ENCODE measurements at regions of chr4 and their contacts with region 1.

Region 1: GRCh38 chr4:6716018-6716911 is at the start of gene BLOC1S4:
- DNase-seq: peak; percentile 82 to 93
- ATAC-seq: peak; percentile 79 to 82
- H3K4me3 ChIP-seq: peak within 1 kb of the TSS; percentile 81
- H3K27ac ChIP-seq: peak within 1 kb of the TSS; percentile 92 to 99
- H3K4me1 ChIP-seq: peaks cover 21% of the 10 kb centered on the region; the same call in 1 of the 3 replicates
- CTCF ChIP-seq: no peak
- EP300 ChIP-seq: no peak
- POLR2A ChIP-seq: peak; percentile 69
- RAD21 ChIP-seq: no peak
- polyA plus RNA-seq, gene BLOC1S4: 11.7 and 13.2 TPM in 2 replicates

Region 2: GRCh38 chr4:6695660-6696630 is 20.3 kb before region 1 on chr4:
- CTCF ChIA-PET with region 1: interaction called, 11 read pairs
- POLR2A ChIA-PET with region 1: no interaction called
- DNase-seq: peak; percentile 46 to 90
- ATAC-seq: peak; percentile 89 to 90
- H3K4me3 ChIP-seq: peak overlapping the region; percentile 39; the same call in 2 of the 3 replicates
- H3K27ac ChIP-seq: peak overlapping the region; percentile 84 to 88
- H3K4me1 ChIP-seq: peaks cover 45% of the 10 kb centered on the region
- CTCF ChIP-seq: no peak
- EP300 ChIP-seq: 0 out of 5 replicates have a peak, but pooled peaks of 1 of the 2 experiments have one; percentile 43
- POLR2A ChIP-seq: no peak
- RAD21 ChIP-seq: peak in 1 of 2 experiments; percentile 39; a peak in 1 of 5 replicates

Region 3: GRCh38 chr4:6732441-6733357 is 16.4 kb after region 1 on chr4:
- CTCF ChIA-PET with region 1: interaction called, 38 read pairs
- POLR2A ChIA-PET with region 1: no interaction called
- DNase-seq: peak; percentile 69 to 89
- ATAC-seq: peak; percentile 97 to 98
- H3K4me3 ChIP-seq: no peak overlapping the region
- H3K27ac ChIP-seq: peak overlapping the region; percentile 99 to 100
- H3K4me1 ChIP-seq: peaks cover 19% of the 10 kb centered on the region
- CTCF ChIP-seq: no peak
- EP300 ChIP-seq: 0 out of 5 replicates have a peak, but pooled peaks of 1 of the 2 experiments have one; percentile 15
- POLR2A ChIP-seq: no peak
- RAD21 ChIP-seq: no peak

Region 4: DNA sequence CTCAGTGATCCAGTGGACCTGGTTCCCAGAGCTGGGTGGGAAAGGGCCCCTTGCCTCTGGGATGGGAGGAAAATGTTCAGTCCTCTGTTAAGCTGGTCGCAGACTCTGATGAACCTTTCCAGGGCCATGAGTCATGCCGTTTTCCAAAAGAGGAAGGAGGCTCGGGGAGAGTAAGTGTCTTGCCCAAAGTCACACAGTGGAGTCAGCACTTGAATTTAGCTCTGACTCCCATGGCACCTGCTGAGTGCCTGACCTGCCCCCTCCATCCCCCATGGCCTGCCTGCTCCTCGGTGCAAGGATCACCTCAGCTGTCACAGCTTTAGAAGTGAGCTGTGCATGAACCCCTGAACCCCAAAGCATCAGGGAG is 52.3 kb after region 1 on chr4:
- CTCF ChIA-PET with region 1: interaction called, 11 read pairs
- POLR2A ChIA-PET with region 1: interaction called, 3 read pairs
- DNase-seq: no peak
- ATAC-seq: peak in 1 of 2 experiments; percentile 45; a peak in 3 of 6 replicates
- H3K4me3 ChIP-seq: no peak overlapping the region
- H3K27ac ChIP-seq: peak overlapping the region; percentile 41 to 60; a peak in 4 of 6 replicates
- H3K4me1 ChIP-seq: peaks cover 17% of the 10 kb centered on the region
- CTCF ChIP-seq: no peak
- EP300 ChIP-seq: no peak
- POLR2A ChIP-seq: no peak
- RAD21 ChIP-seq: no peak

Region 5: GRCh38 chr4:7081891-7082471 is 365.7 kb after region 1 on chr4:
- CTCF ChIA-PET with region 1: interaction called, 18 read pairs
- POLR2A ChIA-PET with region 1: no interaction called
- DNase-seq: peak; percentile 66
- ATAC-seq: peak; percentile 76 to 91
- H3K4me3 ChIP-seq: no peak overlapping the region
- H3K27ac ChIP-seq: no peak overlapping the region
- H3K4me1 ChIP-seq: no peaks in the 10 kb centered on the region
- CTCF ChIP-seq: peak; percentile 55
- EP300 ChIP-seq: no peak
- POLR2A ChIP-seq: no peak
- RAD21 ChIP-seq: peak; percentile 70 to 79